ENCODE measurements at regions of chr1 and their contacts with region 1.

Region 1: GRCh38 chr1:93878889-93879586 is at the start of gene DNTTIP2:
- DNase-seq: peak; percentile 86
- H3K4me3 Mint-ChIP-seq: peak within 1 kb of the TSS; percentile 95
- H3K27ac Mint-ChIP-seq: peak within 1 kb of the TSS; percentile 98
- H3K4me1 Mint-ChIP-seq: peaks cover 55% of the 10 kb centered on the region
- H3K27me3 Mint-ChIP-seq: no peaks in the 10 kb centered on the region
- total RNA-seq, gene DNTTIP2: 80.3 and 90.8 TPM in 2 replicates

Region 2: GRCh38 chr1:92831762-92832536 is 1047.1 kb before region 1 on chr1 and contains the start of gene RPL5:
- intact Hi-C with region 1: loop called (anchors 10 kb)
- DNase-seq: peak; percentile 96
- H3K4me3 Mint-ChIP-seq: peak within 1 kb of the TSS; percentile 96
- H3K27ac Mint-ChIP-seq: peak within 1 kb of the TSS; percentile 97
- H3K4me1 Mint-ChIP-seq: peaks cover 35% of the 10 kb centered on the region
- H3K27me3 Mint-ChIP-seq: peaks cover 2% of the 10 kb centered on the region
- total RNA-seq, gene RPL5: 1,115 and 1,120 TPM in 2 replicates

Region 3: GRCh38 chr1:93629099-93630059 is 249.7 kb before region 1 on chr1:
- intact Hi-C with region 1: loop called (anchors 1 kb)
- DNase-seq: peak; percentile 24
- H3K4me3 Mint-ChIP-seq: no peak overlapping the region
- H3K27ac Mint-ChIP-seq: no peak overlapping the region
- H3K4me1 Mint-ChIP-seq: no peaks in the 10 kb centered on the region
- H3K27me3 Mint-ChIP-seq: peaks cover 7% of the 10 kb centered on the region

Region 4: GRCh38 chr1:93749894-93750301 is 129.1 kb before region 1 on chr1:
- intact Hi-C with region 1: no loop called
- DNase-seq: no peak
- H3K4me3 Mint-ChIP-seq: no peak overlapping the region
- H3K27ac Mint-ChIP-seq: no peak overlapping the region
- H3K4me1 Mint-ChIP-seq: peaks cover 36% of the 10 kb centered on the region
- H3K27me3 Mint-ChIP-seq: peaks cover 11% of the 10 kb centered on the region

Region 5: DNA sequence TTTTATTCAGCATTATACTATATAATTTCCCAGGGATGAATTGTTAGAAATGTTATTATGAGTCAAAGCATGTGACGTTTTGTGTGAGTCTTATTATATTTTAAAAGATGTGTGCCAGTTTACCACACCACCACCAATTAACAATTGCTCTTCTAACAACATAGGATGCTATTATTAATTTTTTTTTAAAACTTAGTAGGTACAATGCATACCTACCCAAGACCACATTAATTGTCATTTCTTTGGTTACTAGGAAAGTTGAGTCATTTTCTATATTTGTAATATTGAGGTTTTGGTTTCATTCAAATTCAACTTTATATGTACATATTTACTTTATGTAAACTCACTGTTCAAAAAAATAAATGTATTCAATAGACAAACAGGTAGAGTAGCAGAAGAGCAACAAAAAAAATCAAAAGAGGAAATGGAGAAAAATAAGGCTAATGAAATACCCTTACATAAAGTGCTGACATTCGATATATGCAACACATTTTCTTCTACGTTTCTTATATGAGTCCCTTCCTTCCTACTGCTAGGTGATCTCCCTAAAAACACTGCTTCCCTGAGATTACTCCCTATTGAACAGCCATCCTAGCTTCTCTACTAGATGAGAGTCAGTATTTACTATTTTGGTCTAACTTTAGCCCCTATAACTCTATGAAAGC is 20.6 kb after region 1 on chr1:
- intact Hi-C with region 1: loop called (anchors 2 kb)
- DNase-seq: no peak
- H3K4me3 Mint-ChIP-seq: no peak overlapping the region
- H3K27ac Mint-ChIP-seq: no peak overlapping the region
- H3K4me1 Mint-ChIP-seq: peaks cover 12% of the 10 kb centered on the region
- H3K27me3 Mint-ChIP-seq: no peaks in the 10 kb centered on the region

Measured in activated T-helper 1 cell treated with anti-CD3 and anti-CD28 coated beads, Interleukin-12 subunit alpha, Interleukin-12 subunit beta, Interleukin-2, Interleukin-4 antibody, amounts not matched to agents 30 ng/mL and 10 ng/mL and 1 ng/mL, durations not matched to agents 14 hours and 24 hours and 36 hours (primary cell).